PC-3 (cell line): ENCODE measurements at regions of chr9 and their contacts with region 1.

Region 1: DNA sequence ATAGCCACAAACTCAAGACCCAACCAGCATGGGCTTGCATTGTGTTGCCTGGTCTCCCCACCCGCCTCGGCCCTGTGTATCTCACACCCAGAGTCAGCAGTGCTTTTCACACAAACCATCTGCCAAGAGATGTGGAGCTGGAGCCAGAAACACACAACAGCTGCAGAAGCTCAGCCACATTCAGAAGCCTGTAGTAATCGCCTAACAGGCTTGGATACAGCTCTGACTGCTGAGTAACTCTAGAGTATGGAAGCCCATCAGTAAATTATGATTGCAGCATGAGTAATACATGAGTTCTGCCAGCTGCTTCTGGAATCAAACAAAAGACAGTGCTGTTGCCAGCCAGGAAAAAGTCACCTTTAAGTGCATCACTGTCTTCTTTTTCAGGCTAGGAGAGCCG is 16.0 kb downstream of the TEK start:
- DNase-seq: peak; percentile 94
- ATAC-seq: peak; percentile 94
- H3K4me3 ChIP-seq: no peak overlapping the region
- H3K27ac ChIP-seq: peak overlapping the region; percentile 82
- H3K4me1 ChIP-seq: peaks cover 42% of the 10 kb centered on the region
- H3K27me3 ChIP-seq: no peaks in the 10 kb centered on the region
- CTCF ChIP-seq: no peak

Region 2: GRCh38 chr9:27194401-27195091 is 69.5 kb after region 1 on chr9:
- CTCF ChIA-PET with region 1: no interaction called
- POLR2A ChIA-PET with region 1: no interaction called
- intact Hi-C with region 1: loop called (anchors 10 kb)
- DNase-seq: peak; percentile 72
- ATAC-seq: peak; percentile 99
- H3K4me3 ChIP-seq: no peak overlapping the region
- H3K27ac ChIP-seq: 0 out of 2 replicates have a peak overlapping the region, but pooled peaks have one; percentile 6
- H3K4me1 ChIP-seq: peaks cover 16% of the 10 kb centered on the region
- H3K27me3 ChIP-seq: no peaks in the 10 kb centered on the region
- CTCF ChIP-seq: no peak

Region 3: DNA sequence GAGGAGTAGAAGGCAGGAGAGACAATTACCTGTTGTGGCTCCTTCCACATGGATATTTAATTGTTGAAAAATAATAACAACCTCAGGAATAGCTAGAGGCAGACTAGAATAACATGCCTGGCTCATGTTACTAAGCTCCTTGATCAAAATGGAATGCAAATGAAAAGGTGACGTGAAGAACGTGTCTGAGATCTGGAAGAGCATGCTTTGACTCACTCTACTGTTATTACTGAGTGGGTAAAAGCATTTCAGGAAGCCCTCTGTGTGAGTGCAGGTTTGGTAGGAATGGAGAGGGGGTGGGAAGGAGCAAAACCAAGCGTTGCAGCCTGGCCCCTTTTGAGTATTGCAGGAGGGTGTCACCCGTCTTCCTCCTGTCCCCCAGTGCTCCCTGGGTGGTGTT is 87.2 kb after region 1 on chr9:
- CTCF ChIA-PET with region 1: no interaction called
- POLR2A ChIA-PET with region 1: no interaction called
- intact Hi-C with region 1: no loop called
- DNase-seq: no peak
- ATAC-seq: no peak
- H3K4me3 ChIP-seq: no peak overlapping the region
- H3K27ac ChIP-seq: no peak overlapping the region
- H3K4me1 ChIP-seq: no peaks in the 10 kb centered on the region
- H3K27me3 ChIP-seq: no peaks in the 10 kb centered on the region
- CTCF ChIP-seq: no peak

Region 4: GRCh38 chr9:28014212-28014611 is 889.2 kb after region 1 on chr9:
- CTCF ChIA-PET with region 1: no interaction called
- POLR2A ChIA-PET with region 1: no interaction called
- intact Hi-C with region 1: no loop called
- DNase-seq: no peak
- ATAC-seq: no peak
- H3K4me3 ChIP-seq: no peak overlapping the region
- H3K27ac ChIP-seq: no peak overlapping the region
- H3K4me1 ChIP-seq: no peaks in the 10 kb centered on the region
- H3K27me3 ChIP-seq: peaks cover 4% of the 10 kb centered on the region
- CTCF ChIP-seq: no peak